Sigmoid colon (tissue), 7 donors: ENCODE measurements at regions of chr7 and their contacts with region 1.

Region 1: GRCh38 chr7:135211179-135211945 is at the start of gene WDR91:
- DNase-seq: peak; percentile 98
- H3K4me3 ChIP-seq: peak within 1 kb of the TSS; percentile 67 to 83 (median 79)
- H3K27ac ChIP-seq: peak within 1 kb of the TSS; percentile 89 to 96 (median 93)
- H3K4me1 ChIP-seq: peaks cover 0 to 22% (median 18%) of the 10 kb centered on the region in 4 donors
- H3K27me3 ChIP-seq: no peaks in the 10 kb centered on the region
- CTCF ChIP-seq: no peak
- EP300 ChIP-seq: no peak
- POLR2A ChIP-seq: peak; percentile 60 to 63
- total RNA-seq, gene WDR91: 11.0 to 14.1 (median 11.4) TPM

Region 2: DNA sequence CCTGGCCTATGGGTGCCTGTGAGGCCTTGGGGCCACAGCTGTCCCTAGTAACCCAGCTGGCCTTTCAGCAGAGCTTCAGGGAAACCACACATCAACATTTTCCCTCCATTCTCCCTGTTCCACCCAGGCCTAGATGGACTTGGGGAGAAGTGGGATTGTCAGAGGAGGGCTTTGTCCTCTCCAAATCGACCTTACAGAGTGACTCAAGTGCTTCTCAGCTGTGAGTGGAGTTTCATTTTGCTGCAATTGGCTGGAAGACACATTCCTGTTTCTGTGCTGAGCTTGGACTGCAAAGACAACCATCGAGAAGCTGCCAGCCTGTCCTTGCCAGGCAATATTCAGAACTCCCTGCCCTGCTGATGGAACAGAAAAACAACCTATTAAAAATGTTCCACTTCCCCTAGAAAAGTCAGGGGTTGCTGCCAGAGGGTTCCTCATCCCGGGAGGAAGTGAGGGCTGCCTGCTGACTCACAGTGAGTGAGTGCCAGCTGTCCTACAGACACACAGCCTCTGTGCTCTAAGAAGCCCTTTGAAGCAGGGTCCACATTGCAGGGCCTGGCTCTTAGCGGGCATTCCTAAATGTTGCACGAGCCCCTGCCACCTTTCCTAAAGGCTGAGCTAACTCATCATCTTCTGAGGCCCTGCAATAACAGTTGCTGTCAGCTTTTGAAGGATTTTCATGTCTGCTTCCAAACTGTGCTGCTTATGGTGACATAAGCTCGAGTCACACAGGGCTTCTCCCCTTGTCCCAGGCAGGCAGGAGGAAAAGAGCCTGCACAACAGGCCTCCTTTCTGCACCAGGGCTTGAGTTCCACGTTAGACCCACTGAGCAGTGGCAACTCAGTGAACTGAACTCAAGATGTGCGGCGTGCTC is 42.8 kb after region 1 on chr7:
- intact Hi-C with region 1: loop called (anchors 5 kb)
- DNase-seq: peak; percentile 88
- H3K4me3 ChIP-seq: no peak overlapping the region
- H3K27ac ChIP-seq: peak overlapping the region; percentile 79 to 85 (median 82)
- H3K4me1 ChIP-seq: peaks cover 0 to 27% (median 24%) of the 10 kb centered on the region in 4 donors
- H3K27me3 ChIP-seq: no peaks in the 10 kb centered on the region
- CTCF ChIP-seq: no peak
- EP300 ChIP-seq: no peak
- POLR2A ChIP-seq: no peak

Region 3: GRCh38 chr7:135509903-135510602 is 298.7 kb after region 1 on chr7 and contains the start of gene CNOT4:
- intact Hi-C with region 1: loop called (anchors 5 kb)
- DNase-seq: peak; percentile 98
- H3K4me3 ChIP-seq: peak within 1 kb of the TSS; percentile 68 to 82 (median 80)
- H3K27ac ChIP-seq: peak within 1 kb of the TSS; percentile 92 to 97 (median 94)
- H3K4me1 ChIP-seq: peaks cover 0 to 35% (median 29%) of the 10 kb centered on the region in 4 donors
- H3K27me3 ChIP-seq: no peaks in the 10 kb centered on the region
- CTCF ChIP-seq: no peak
- EP300 ChIP-seq: no peak
- POLR2A ChIP-seq: peak in 1 of 2 donors; percentile 37
- total RNA-seq, gene CNOT4: 23.5 to 31.6 (median 27.2) TPM